HepG2 (cell line): ENCODE measurements at regions of chr13 and their contacts with region 1.

Region 1: GRCh38 chr13:112956571-112957294 is 12.3 kb upstream of the MCF2L start:
- DNase-seq: peak; percentile 77
- ATAC-seq: peak; percentile 78
- H3K4me3 ChIP-seq: peak overlapping the region in 1 of 3 experiments; percentile 40; a peak in 2 of 6 replicates
- H3K27ac ChIP-seq: peak overlapping the region; percentile 63
- H3K4me1 ChIP-seq: peaks cover 85% of the 10 kb centered on the region
- H3K27me3 ChIP-seq: no peaks in the 10 kb centered on the region
- CTCF ChIP-seq: peak; percentile 49
- EP300 ChIP-seq: peak in 1 of 2 experiments; percentile 51; a peak in 2 of 4 replicates
- POLR2A ChIP-seq: peak in 1 of 2 experiments; percentile 40; a peak in 1 of 4 replicates
- RAD21 ChIP-seq: no peak

Region 2: DNA sequence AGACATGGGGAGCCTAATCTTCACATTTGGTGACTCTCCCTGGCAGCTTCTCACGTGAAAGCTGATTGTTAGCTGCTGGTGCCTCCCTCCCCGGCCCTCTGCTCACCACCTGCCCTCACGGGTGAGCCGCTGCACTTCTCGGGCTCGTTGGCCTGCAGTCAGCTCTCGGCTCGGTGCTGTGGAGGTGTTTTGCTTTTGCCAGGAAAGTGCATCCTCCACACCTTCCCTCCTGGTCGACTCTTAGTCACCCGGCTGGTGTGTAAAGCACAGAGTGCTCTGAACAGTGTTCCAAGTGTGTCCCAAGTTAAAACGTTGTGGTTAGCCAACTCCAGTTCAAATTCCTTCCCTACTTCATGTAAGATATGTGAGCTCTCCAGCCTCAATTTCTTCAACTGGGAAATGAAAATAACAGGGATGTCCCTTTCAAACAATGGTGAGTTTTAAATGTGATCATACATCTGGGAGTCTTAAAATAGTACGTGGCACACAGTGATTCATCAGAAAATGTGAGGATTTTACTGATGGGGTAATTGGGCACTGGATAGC is 212.2 kb before region 1 on chr13:
- CTCF ChIA-PET with region 1: no interaction called
- POLR2A ChIA-PET with region 1: no interaction called
- in situ Hi-C with region 1: no loop called
- intact Hi-C with region 1: no loop called
- DNase-seq: no peak
- ATAC-seq: no peak
- H3K4me3 ChIP-seq: no peak overlapping the region
- H3K27ac ChIP-seq: no peak overlapping the region
- H3K4me1 ChIP-seq: peaks cover 29% of the 10 kb centered on the region
- H3K27me3 ChIP-seq: no peaks in the 10 kb centered on the region
- CTCF ChIP-seq: no peak
- EP300 ChIP-seq: no peak
- POLR2A ChIP-seq: no peak
- RAD21 ChIP-seq: no peak

Region 3: DNA sequence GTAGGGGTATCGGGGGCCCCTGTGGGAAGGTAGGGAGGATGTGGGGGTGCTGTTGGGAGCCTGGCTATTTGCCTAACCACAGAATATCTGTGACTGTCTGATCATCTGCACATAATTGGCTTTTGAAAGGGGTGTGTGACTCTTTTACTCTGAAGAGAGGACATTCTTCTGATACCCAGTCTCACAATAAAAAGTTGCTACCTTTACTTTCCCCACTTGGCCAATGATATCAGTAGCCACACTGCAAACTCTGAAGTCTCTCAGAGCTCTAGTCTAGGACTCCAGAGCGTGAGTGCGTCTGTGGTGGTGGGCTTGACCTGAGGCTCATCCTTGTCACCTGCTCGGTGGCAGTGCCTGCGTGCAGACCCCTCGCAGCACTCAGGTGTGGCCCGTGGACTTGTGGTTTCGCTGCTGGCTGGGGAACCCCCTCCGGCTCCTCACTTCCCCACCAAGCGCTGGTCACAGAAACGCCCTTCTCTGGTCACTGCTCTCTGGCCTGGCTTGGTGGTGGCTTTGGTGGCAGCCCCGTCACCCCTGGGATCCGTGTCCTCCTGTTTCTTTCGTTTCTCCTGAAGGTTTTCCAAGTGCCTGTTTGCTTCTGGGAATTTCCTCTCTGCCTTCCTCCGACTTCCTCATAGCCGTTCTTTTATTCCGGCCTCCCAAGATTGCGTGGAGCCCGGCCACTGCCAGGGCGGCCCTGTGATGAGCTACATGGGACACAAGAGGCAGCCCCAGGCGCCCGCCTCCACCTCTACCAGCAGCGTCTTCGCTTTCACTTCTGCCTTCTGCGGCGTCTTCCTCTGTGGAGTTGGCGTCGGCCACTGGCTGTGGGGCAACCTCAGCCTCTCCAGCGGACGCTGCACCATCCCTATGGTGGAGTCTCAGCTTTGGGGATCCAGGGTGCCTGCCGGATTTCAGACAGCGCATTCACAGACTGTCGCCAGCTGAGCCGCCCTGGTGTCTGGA is 188.9 kb before region 1 on chr13:
- CTCF ChIA-PET with region 1: no interaction called
- POLR2A ChIA-PET with region 1: no interaction called
- in situ Hi-C with region 1: no loop called
- intact Hi-C with region 1: no loop called
- DNase-seq: no peak
- ATAC-seq: no peak
- H3K4me3 ChIP-seq: no peak overlapping the region
- H3K27ac ChIP-seq: no peak overlapping the region
- H3K4me1 ChIP-seq: no peaks in the 10 kb centered on the region
- H3K27me3 ChIP-seq: no peaks in the 10 kb centered on the region; a peak in 1 of 5 replicates
- CTCF ChIP-seq: no peak
- EP300 ChIP-seq: no peak
- POLR2A ChIP-seq: no peak
- RAD21 ChIP-seq: no peak

Region 4: GRCh38 chr13:112942689-112943308 is 13.9 kb before region 1 on chr13:
- CTCF ChIA-PET with region 1: interaction called, 9 read pairs
- POLR2A ChIA-PET with region 1: interaction called, 14 read pairs
- in situ Hi-C with region 1: no loop called
- intact Hi-C with region 1: loop called (anchors 1 kb)
- DNase-seq: peak; percentile 94
- ATAC-seq: peak; percentile 92
- H3K4me3 ChIP-seq: peak overlapping the region; percentile 42 to 72 (median 67)
- H3K27ac ChIP-seq: no peak overlapping the region
- H3K4me1 ChIP-seq: peaks cover 30% of the 10 kb centered on the region
- H3K27me3 ChIP-seq: no peaks in the 10 kb centered on the region; a peak in 1 of 5 replicates
- CTCF ChIP-seq: peak; percentile 99
- EP300 ChIP-seq: no peak
- POLR2A ChIP-seq: no peak; a peak in 1 of 4 replicates
- RAD21 ChIP-seq: peak; percentile 95

Region 5: GRCh38 chr13:112968908-112969691 is 12.4 kb after region 1 on chr13 and contains the start of gene MCF2L:
- CTCF ChIA-PET with region 1: no interaction called
- POLR2A ChIA-PET with region 1: interaction called, 8 read pairs
- in situ Hi-C with region 1: no loop called
- intact Hi-C with region 1: loop called (anchors 2 kb)
- DNase-seq: peak; percentile 56
- ATAC-seq: peak; percentile 86
- H3K4me3 ChIP-seq: peak within 1 kb of the TSS; percentile 69 to 85 (median 83)
- H3K27ac ChIP-seq: peak within 1 kb of the TSS; percentile 56
- H3K4me1 ChIP-seq: peaks cover 43% of the 10 kb centered on the region
- H3K27me3 ChIP-seq: no peaks in the 10 kb centered on the region
- CTCF ChIP-seq: peak; percentile 59
- EP300 ChIP-seq: no peak
- POLR2A ChIP-seq: no peak
- RAD21 ChIP-seq: 0 out of 2 replicates have a peak, but pooled peaks have one; percentile 7
- total RNA-seq, gene MCF2L: 13.7 and 19.4 TPM in 2 replicates

Region 6: GRCh38 chr13:113001241-113002140 is 44.8 kb after region 1 on chr13:
- CTCF ChIA-PET with region 1: no interaction called
- POLR2A ChIA-PET with region 1: interaction called, 13 read pairs
- in situ Hi-C with region 1: no loop called
- intact Hi-C with region 1: loop called (anchors 2 kb)
- DNase-seq: peak; percentile 47
- ATAC-seq: peak; percentile 82
- H3K4me3 ChIP-seq: peak overlapping the region; percentile 61 to 76 (median 64); a peak in 5 of 6 replicates
- H3K27ac ChIP-seq: peak overlapping the region; percentile 37
- H3K4me1 ChIP-seq: peaks cover 60% of the 10 kb centered on the region
- H3K27me3 ChIP-seq: no peaks in the 10 kb centered on the region
- CTCF ChIP-seq: peak; percentile 11; the same call in 1 of the 2 replicates
- EP300 ChIP-seq: no peak
- POLR2A ChIP-seq: no peak
- RAD21 ChIP-seq: no peak

Region 7: DNA sequence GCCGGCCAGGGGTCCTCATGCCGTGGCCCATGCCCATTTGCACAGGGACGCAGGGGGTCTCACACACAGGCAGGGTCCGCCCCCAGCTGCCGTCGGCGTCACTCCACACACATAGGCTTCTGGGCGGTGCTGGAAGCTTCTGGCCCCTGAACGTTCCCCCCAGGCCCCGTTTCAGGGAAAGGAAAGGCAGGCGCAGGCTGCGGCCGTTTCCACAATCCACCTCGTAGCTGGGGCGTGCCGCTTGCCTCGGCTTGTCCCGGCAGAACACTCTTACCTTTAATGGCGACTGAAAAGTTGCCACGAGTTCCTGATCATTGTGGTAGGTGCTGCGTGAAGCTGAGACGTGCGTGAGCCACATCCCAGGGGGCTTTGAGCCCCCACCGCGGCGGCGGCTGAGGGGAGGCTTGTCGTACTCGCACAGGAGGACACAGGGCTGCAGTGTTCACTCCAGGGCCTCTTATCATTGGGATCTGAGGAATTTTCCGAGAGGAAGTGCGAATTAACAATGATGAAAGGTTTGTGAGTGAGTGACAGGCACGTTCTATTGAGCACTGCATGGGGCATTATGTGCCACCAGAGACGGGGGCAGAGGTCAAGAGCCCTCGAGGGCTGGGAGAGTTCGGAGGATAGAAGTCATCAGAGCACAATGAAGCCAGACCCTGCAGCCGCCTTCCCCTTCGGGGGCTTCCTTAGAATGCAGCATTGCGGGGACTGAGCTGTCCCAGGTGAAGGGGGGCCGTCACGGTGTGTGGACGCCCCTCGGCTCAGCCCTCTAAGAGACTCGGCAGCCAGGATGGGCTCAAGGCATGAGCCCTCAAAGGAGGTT is 65.9 kb after region 1 on chr13:
- CTCF ChIA-PET with region 1: no interaction called
- POLR2A ChIA-PET with region 1: interaction called, 10 read pairs
- in situ Hi-C with region 1: no loop called
- intact Hi-C with region 1: loop called (anchors 2 kb)
- DNase-seq: peak; percentile 98
- ATAC-seq: peak; percentile 81
- H3K4me3 ChIP-seq: peak overlapping the region in 2 of 3 experiments; percentile 35 to 36; a peak in 3 of 6 replicates
- H3K27ac ChIP-seq: peak overlapping the region; percentile 85
- H3K4me1 ChIP-seq: peaks cover 46% of the 10 kb centered on the region
- H3K27me3 ChIP-seq: no peaks in the 10 kb centered on the region
- CTCF ChIP-seq: no peak
- EP300 ChIP-seq: peak; percentile 69 to 92; a peak in 3 of 4 replicates
- POLR2A ChIP-seq: peak in 1 of 2 experiments; percentile 47; a peak in 1 of 4 replicates
- RAD21 ChIP-seq: no peak